SK-N-SH (cell line): ENCODE measurements at regions of chr2 and their contacts with region 1.

Region 1: DNA sequence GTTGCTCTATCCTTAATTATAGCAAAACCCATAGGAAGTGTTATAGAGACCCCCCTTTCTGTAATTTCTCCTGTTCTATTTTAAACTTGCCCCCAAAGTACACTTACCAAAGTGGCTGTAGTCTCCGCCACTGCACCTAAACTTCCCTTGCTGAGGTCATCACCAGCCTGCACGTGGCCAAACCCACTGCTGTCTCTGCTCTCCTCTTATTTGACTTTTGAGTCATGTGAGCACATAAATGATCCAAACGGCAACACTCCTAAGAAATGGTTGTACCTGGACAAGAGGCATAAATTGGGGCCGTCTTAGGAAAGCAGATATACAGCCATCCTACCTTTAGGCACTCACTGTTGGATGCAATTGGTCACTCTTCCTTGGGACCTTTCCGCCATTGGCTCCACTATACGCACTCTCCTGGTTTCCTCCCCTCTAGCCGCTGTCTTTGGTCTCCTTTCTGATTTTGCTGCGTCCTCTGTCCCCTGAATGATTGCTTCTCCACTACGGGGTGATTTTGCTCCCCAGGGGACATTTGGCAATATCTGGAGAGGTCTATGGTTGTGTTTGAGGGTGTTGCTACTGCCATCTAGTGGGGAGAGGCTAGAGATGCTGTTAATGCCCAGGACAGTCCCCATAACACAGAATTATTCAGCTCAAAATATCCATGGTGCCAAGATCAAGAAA is 19.2 kb upstream of the IL36G start:
- DNase-seq: peak; percentile 55
- H3K4me3 ChIP-seq: no peak overlapping the region
- H3K27ac ChIP-seq: no peak overlapping the region
- H3K4me1 ChIP-seq: no peaks in the 10 kb centered on the region; a peak in 1 of 4 replicates
- H3K27me3 ChIP-seq: peaks cover 44% of the 10 kb centered on the region; the same call in 1 of the 2 replicates
- CTCF ChIP-seq: peak; percentile 88
- EP300 ChIP-seq: no peak
- RAD21 ChIP-seq: peak; percentile 60

Region 2: GRCh38 chr2:112941753-112942658 is 16.6 kb before region 1 on chr2:
- CTCF ChIA-PET with region 1: interaction called, 23 read pairs
- POLR2A ChIA-PET with region 1: no interaction called
- DNase-seq: peak; percentile 53
- H3K4me3 ChIP-seq: peak overlapping the region in 1 of 2 experiments; percentile 17; a peak in 1 of 4 replicates
- H3K27ac ChIP-seq: no peak overlapping the region
- H3K4me1 ChIP-seq: no peaks in the 10 kb centered on the region; a peak in 1 of 4 replicates
- H3K27me3 ChIP-seq: peaks cover 5% of the 10 kb centered on the region; the same call in 1 of the 2 replicates
- CTCF ChIP-seq: peak; percentile 88
- EP300 ChIP-seq: no peak
- RAD21 ChIP-seq: peak; percentile 82

Region 3: DNA sequence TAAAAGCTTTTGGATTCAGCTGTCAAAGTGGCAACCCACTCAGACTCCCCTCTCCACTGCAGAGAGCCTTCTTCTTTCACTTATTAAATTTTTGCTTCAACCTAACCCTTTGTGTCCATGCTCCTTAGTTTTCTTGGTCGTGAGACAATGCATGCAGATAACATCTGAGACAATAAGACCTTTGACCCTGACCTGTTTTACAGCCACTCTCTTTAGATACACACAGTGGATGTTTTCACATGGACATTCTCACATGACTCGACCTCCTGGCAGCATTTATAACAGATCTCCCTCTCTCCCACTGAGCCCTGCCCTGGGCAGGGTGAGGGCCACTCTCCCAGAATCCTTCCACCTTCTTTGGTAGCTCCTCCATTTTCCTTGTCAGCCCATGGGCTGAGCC is 11.2 kb before region 1 on chr2:
- CTCF ChIA-PET with region 1: interaction called, 23 read pairs
- POLR2A ChIA-PET with region 1: interaction called, 3 read pairs
- DNase-seq: no peak
- H3K4me3 ChIP-seq: no peak overlapping the region
- H3K27ac ChIP-seq: no peak overlapping the region
- H3K4me1 ChIP-seq: no peaks in the 10 kb centered on the region
- H3K27me3 ChIP-seq: peaks cover 12% of the 10 kb centered on the region; the same call in 1 of the 2 replicates
- CTCF ChIP-seq: no peak
- EP300 ChIP-seq: no peak
- RAD21 ChIP-seq: no peak

Region 4: GRCh38 chr2:112977559-112978056 is 19.0 kb after region 1 on chr2 and contains the start of gene IL36G:
- CTCF ChIA-PET with region 1: interaction called, 12 read pairs
- POLR2A ChIA-PET with region 1: no interaction called
- DNase-seq: no peak
- H3K4me3 ChIP-seq: no peak within 1 kb of the TSS
- H3K27ac ChIP-seq: no peak within 1 kb of the TSS
- H3K4me1 ChIP-seq: no peaks in the 10 kb centered on the region
- H3K27me3 ChIP-seq: peaks cover 8% of the 10 kb centered on the region; the same call in 1 of the 2 replicates
- CTCF ChIP-seq: no peak
- EP300 ChIP-seq: no peak
- RAD21 ChIP-seq: no peak
- polyA plus RNA-seq, gene IL36G: not detected in 2 replicates

Region 5: GRCh38 chr2:113025737-113026136 is 67.2 kb after region 1 on chr2:
- CTCF ChIA-PET with region 1: no interaction called
- POLR2A ChIA-PET with region 1: no interaction called
- DNase-seq: no peak
- H3K4me3 ChIP-seq: no peak overlapping the region
- H3K27ac ChIP-seq: no peak overlapping the region
- H3K4me1 ChIP-seq: no peaks in the 10 kb centered on the region
- H3K27me3 ChIP-seq: peaks cover 5% of the 10 kb centered on the region; the same call in 1 of the 2 replicates
- CTCF ChIP-seq: no peak
- EP300 ChIP-seq: no peak
- RAD21 ChIP-seq: no peak